ENCODE measurements at regions of chr9 and their contacts with region 1.

Region 1: DNA sequence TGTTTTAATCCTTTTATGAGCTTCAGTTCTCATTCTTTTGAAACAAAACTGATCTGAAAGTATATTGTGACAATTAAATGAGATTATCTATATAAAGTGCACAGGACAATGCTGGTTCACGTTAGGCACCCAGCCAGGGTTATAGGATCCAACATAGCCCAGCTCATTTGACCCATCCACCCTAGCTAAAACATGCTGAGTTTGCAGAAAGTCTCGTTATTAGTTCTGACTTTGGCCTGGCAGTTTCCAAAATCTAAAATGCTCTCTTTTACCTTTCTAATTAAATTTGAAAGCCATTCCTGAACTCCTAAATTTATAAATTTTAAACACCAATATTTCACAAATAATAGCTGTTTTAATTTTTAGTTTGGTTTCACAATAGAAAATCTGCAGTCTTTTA is 131.9 kb upstream of the PTPRD start:
- DNase-seq: no peak
- ATAC-seq: no peak
- H3K4me3 ChIP-seq: no peak overlapping the region
- H3K27ac ChIP-seq: no peak overlapping the region
- H3K4me1 ChIP-seq: no peaks in the 10 kb centered on the region
- H3K27me3 ChIP-seq: no peaks in the 10 kb centered on the region
- CTCF ChIP-seq: no peak
- POLR2A ChIP-seq: no peak

Region 2: GRCh38 chr9:10071579-10071978 is 673.1 kb before region 1 on chr9:
- in situ Hi-C with region 1: no loop called
- intact Hi-C with region 1: no loop called
- DNase-seq: no peak
- ATAC-seq: no peak
- H3K4me3 ChIP-seq: no peak overlapping the region
- H3K27ac ChIP-seq: no peak overlapping the region
- H3K4me1 ChIP-seq: no peaks in the 10 kb centered on the region
- H3K27me3 ChIP-seq: no peaks in the 10 kb centered on the region
- CTCF ChIP-seq: no peak
- POLR2A ChIP-seq: no peak

Region 3: GRCh38 chr9:10512144-10512543 is 232.5 kb before region 1 on chr9:
- in situ Hi-C with region 1: no loop called
- intact Hi-C with region 1: no loop called
- DNase-seq: no peak
- ATAC-seq: no peak
- H3K4me3 ChIP-seq: no peak overlapping the region
- H3K27ac ChIP-seq: no peak overlapping the region
- H3K4me1 ChIP-seq: no peaks in the 10 kb centered on the region
- H3K27me3 ChIP-seq: no peaks in the 10 kb centered on the region
- CTCF ChIP-seq: no peak
- POLR2A ChIP-seq: no peak

Region 4: DNA sequence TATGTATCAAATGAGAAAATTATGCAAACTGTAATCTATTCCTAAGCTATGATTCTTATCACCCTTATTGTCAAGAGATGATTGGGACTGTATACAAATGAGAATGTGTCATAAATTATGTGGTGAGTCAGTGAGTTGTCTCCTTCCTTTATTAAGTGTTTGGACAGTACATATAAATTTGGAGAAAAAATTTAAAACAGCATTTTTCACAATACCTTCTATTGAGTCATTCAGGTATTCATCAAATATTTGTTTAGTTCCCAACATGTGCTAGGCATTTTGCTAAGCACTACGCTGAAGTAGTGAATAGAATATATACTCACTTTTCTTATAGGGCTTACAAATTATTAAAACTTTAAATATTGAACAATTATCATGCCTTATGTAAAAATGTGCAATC is 95.6 kb before region 1 on chr9:
- in situ Hi-C with region 1: loop called in 1 of 4 experiments (anchors 25 kb)
- intact Hi-C with region 1: no loop called
- DNase-seq: no peak
- ATAC-seq: no peak
- H3K4me3 ChIP-seq: no peak overlapping the region
- H3K27ac ChIP-seq: no peak overlapping the region
- H3K4me1 ChIP-seq: no peaks in the 10 kb centered on the region
- H3K27me3 ChIP-seq: no peaks in the 10 kb centered on the region
- CTCF ChIP-seq: no peak
- POLR2A ChIP-seq: no peak

Region 5: GRCh38 chr9:10678790-10679189 is 65.9 kb before region 1 on chr9:
- in situ Hi-C with region 1: no loop called
- intact Hi-C with region 1: no loop called
- DNase-seq: no peak
- ATAC-seq: no peak
- H3K4me3 ChIP-seq: no peak overlapping the region
- H3K27ac ChIP-seq: no peak overlapping the region
- H3K4me1 ChIP-seq: no peaks in the 10 kb centered on the region
- H3K27me3 ChIP-seq: no peaks in the 10 kb centered on the region
- CTCF ChIP-seq: no peak
- POLR2A ChIP-seq: no peak

Measured in gastrocnemius medialis (tissue), 4 donors.